BJ (cell line): ENCODE measurements at regions of chr20 and their contacts with region 1.

Region 1: GRCh38 chr20:18523066-18523465 is 15.3 kb downstream of the SEC23B start:
- DNase-seq: no peak
- H3K4me3 ChIP-seq: no peak overlapping the region
- H3K27me3 ChIP-seq: no peaks in the 10 kb centered on the region
- CTCF ChIP-seq: no peak

Region 2: GRCh38 chr20:18154342-18154741 is 368.7 kb before region 1 on chr20:
- CTCF ChIA-PET with region 1: no interaction called
- POLR2A ChIA-PET with region 1: no interaction called
- DNase-seq: no peak
- H3K4me3 ChIP-seq: no peak overlapping the region
- H3K27me3 ChIP-seq: no peaks in the 10 kb centered on the region
- CTCF ChIP-seq: no peak

Region 3: DNA sequence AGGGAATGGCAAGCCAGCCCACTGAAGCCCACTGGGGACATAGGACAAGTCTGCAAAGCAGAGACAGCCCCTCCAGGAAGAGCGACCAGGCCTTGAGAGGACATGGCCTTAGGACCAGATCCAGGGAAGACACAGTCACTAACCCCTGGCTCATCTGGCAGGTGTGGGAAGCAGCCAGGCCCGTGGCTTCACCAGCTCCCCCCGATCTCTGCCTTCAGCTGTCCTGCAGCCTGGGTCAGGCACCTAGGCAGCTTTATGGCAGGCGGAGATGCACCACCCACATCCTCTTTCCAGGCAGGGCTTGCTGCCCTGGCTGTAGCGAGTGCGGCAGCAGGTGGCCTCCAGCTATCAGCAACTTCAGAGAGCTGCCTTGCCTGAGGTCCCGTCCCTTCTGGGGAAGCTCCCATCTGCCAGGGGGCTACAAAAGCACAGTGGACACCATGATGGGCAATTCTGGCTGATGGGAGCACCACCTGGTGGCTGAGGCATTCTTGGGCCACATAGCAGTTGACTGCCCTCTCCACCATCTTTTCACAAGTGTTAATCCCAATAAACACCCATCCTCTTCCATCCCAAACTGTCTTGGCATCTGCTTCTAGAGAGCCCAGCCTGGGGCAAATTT is 142.0 kb before region 1 on chr20:
- CTCF ChIA-PET with region 1: no interaction called
- POLR2A ChIA-PET with region 1: interaction called, 15 read pairs
- DNase-seq: no peak
- H3K4me3 ChIP-seq: no peak overlapping the region
- H3K27me3 ChIP-seq: no peaks in the 10 kb centered on the region
- CTCF ChIP-seq: no peak

Region 4: DNA sequence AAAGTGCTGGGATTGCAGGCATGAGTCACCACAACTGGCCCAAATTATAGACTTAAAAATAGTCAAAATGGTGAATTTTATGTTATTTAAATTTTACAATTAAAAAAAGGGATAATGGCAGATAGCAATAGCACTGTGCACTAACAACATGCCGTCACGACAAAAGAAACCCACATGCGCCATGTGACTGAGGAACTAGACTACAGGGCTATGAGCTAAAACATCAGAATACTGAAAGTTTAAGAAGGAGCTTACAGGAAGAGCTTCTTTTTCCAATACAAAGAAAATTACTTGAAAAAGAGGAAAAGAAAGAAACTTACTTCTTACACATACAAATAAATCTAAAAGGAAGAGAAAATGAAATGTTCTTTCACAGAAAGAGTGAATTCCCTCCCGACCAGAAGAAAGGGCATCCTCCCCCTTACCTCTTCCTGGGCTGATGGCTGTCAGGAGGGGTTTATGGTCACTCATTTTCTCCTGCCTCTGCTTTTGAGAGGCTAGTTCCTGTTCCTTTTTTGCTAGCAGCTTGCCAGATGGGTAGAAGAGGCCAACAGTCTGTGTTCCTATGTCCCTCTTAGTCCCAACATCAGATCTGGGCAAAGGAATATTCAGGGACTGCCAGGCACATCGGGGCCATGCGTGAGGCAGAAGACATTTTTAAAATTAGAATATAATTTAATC is 110.7 kb before region 1 on chr20:
- CTCF ChIA-PET with region 1: interaction called, 3 read pairs
- POLR2A ChIA-PET with region 1: interaction called, 10 read pairs
- DNase-seq: no peak
- H3K4me3 ChIP-seq: no peak overlapping the region
- H3K27me3 ChIP-seq: no peaks in the 10 kb centered on the region
- CTCF ChIP-seq: no peak

Region 5: GRCh38 chr20:18481596-18481995 is 41.5 kb before region 1 on chr20:
- CTCF ChIA-PET with region 1: no interaction called
- POLR2A ChIA-PET with region 1: no interaction called
- DNase-seq: no peak
- H3K4me3 ChIP-seq: no peak overlapping the region
- H3K27me3 ChIP-seq: no peaks in the 10 kb centered on the region
- CTCF ChIP-seq: no peak